Natural killer cell (primary cell): ENCODE measurements at regions of chr17 and their contacts with region 1.

Region 1: DNA sequence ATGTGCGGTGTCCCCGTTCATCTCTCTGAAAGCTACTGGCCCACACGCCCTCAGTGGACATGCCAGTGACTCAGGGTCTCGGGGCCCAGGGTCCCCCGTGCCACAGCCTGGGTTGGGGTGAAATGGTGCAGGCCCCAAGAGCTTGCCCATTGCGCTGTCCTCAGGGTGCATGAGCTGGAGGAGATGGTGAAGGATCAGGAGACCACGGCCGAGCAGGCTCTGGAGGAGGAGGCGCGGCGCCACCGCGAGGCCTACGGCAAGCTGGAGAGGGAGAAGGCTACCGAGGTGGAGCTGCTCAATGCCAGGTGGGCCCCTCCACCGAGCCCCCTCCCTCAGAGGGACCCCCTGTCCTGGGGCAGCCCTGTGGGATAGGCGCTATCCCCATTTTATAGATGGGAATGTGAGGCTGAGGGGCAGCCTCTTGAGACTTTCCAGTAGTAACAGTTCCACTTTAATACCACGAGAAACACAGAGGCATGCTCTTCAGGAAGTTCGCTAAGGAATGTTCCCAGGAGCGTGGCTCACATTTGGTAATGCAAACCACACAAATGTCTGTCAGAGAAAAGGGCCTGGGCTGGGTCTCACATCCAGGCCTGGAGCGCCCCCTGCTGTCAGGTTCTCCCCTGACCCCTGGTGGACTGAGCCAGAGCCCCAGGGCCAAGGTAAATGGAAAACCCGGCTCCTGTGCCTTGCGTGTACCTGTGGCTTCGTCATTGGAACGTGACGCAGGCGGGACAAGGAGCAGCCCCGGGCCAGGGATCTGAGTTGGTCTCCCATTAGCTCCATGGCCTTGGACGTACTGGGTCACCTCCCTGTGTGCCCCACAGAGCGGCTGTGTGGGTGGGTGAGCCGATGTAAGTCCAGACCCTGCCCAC is 133.7 kb downstream of the RAB11FIP4 start:
- DNase-seq: peak; percentile 89 to 90
- ATAC-seq: peak; percentile 77 to 87 (median 80)
- H3K4me3 ChIP-seq: no peak overlapping the region
- H3K4me3 Mint-ChIP-seq: no peak overlapping the region
- H3K27ac ChIP-seq: no peak overlapping the region
- H3K27ac Mint-ChIP-seq: peak overlapping the region; percentile 29 to 42
- H3K4me1 ChIP-seq: peaks cover 8% of the 10 kb centered on the region
- H3K4me1 Mint-ChIP-seq: no peaks in the 10 kb centered on the region
- H3K27me3 ChIP-seq: no peaks in the 10 kb centered on the region
- H3K27me3 Mint-ChIP-seq: no peaks in the 10 kb centered on the region
- CTCF ChIP-seq: peak; percentile 97

Region 2: GRCh38 chr17:30933966-30934365 is 591.2 kb before region 1 on chr17:
- intact Hi-C with region 1: no loop called
- DNase-seq: no peak
- ATAC-seq: no peak
- H3K4me3 ChIP-seq: no peak overlapping the region
- H3K4me3 Mint-ChIP-seq: no peak overlapping the region
- H3K27ac ChIP-seq: no peak overlapping the region
- H3K27ac Mint-ChIP-seq: no peak overlapping the region
- H3K4me1 ChIP-seq: no peaks in the 10 kb centered on the region
- H3K4me1 Mint-ChIP-seq: no peaks in the 10 kb centered on the region
- H3K27me3 ChIP-seq: no peaks in the 10 kb centered on the region
- H3K27me3 Mint-ChIP-seq: no peaks in the 10 kb centered on the region
- CTCF ChIP-seq: no peak

Region 3: DNA sequence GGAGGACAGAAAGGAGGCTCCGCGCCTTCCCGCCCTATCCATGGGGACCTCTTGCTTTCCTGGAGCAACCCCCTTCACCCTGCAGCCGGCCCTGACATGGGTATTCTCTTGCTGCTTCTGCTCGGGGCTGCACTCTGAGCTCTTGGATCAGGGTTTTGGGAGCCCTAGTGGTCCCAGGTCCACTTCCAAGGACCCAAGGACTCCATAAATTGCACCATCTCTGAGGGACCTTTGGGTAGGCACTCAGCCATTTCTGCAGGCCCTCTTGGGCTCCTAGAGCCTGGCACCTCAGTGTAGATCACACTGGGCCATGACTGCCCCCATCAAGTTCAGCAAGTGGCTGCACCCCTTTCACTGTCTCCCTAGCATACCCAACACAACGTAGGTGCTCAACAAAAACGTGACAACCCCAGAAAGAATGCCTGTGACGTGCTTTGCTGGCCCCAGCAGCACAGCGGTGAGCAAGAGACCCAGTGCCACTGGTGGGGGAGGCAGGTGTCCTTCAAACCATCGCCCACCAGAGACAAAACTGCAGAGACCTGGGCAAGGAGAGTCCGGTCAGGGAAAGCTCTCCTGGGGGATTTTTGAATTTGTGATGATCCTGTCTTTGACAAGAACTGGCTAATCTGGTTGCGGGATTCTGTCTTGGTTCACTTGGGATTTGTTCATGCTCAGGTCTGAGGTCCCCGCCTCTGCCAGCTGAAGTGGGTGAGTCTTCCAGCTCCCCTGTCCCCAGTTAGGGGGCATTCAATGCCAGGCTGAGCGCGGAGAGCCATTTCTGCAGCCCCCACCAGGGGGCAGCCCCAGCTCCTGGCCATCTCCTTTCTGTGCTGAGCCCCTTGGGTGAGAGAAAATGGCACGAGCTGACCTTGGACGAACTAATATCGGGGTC is 136.1 kb before region 1 on chr17:
- intact Hi-C with region 1: loop called (anchors 1 kb)
- DNase-seq: peak in 1 of 2 donors; percentile 67
- ATAC-seq: peak; percentile 54 to 68 (median 64)
- H3K4me3 ChIP-seq: no peak overlapping the region
- H3K4me3 Mint-ChIP-seq: no peak overlapping the region
- H3K27ac ChIP-seq: no peak overlapping the region
- H3K27ac Mint-ChIP-seq: no peak overlapping the region
- H3K4me1 ChIP-seq: peaks cover 15% of the 10 kb centered on the region
- H3K4me1 Mint-ChIP-seq: peaks cover 10 to 20% of the 10 kb centered on the region in 2 donors
- H3K27me3 ChIP-seq: peaks cover 23% of the 10 kb centered on the region
- H3K27me3 Mint-ChIP-seq: peaks cover 31 to 36% of the 10 kb centered on the region in 2 donors
- CTCF ChIP-seq: peak; percentile 57

Region 4: DNA sequence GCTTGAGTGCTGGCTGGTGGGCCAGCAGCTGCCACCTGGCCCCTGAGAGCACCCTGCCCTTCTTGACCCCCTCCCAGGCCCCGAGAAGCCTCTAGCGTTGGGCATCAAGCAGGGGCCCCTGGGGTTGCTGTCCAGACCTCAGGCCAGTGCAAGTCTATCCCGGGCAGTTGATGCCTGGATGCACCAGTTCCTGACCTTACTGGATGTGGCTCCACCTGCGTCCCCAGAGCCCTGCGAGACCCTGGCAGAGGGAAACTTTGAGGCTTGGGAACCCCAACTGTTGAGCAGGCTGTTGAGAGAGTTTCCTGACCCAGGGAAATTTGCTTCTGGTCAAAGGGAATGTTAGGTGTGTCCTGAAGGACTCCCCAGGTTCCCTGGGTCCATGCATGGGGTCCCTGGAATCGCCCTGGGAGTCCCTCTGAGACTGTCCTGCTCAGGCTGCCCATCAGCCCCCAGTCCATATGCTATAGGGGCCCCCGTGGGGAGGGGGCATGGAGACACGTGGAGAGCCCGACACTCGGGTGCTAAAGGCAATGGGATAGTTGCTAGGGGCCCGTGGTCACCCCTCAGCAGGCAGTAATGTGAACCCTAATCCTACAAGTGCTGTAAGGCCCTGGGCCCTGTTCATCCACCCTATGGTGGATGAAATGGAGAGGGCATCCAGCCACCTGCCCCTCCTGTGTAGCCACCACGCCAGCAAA is 87.3 kb before region 1 on chr17:
- intact Hi-C with region 1: loop called (anchors 1 kb)
- DNase-seq: no peak
- ATAC-seq: no peak
- H3K4me3 ChIP-seq: no peak overlapping the region
- H3K4me3 Mint-ChIP-seq: no peak overlapping the region
- H3K27ac ChIP-seq: no peak overlapping the region
- H3K27ac Mint-ChIP-seq: no peak overlapping the region
- H3K4me1 ChIP-seq: peaks cover 20% of the 10 kb centered on the region
- H3K4me1 Mint-ChIP-seq: peaks cover 6 to 16% of the 10 kb centered on the region in 2 donors
- H3K27me3 ChIP-seq: no peaks in the 10 kb centered on the region
- H3K27me3 Mint-ChIP-seq: peaks cover 0 to 7% of the 10 kb centered on the region in 2 donors
- CTCF ChIP-seq: no peak

Region 5: DNA sequence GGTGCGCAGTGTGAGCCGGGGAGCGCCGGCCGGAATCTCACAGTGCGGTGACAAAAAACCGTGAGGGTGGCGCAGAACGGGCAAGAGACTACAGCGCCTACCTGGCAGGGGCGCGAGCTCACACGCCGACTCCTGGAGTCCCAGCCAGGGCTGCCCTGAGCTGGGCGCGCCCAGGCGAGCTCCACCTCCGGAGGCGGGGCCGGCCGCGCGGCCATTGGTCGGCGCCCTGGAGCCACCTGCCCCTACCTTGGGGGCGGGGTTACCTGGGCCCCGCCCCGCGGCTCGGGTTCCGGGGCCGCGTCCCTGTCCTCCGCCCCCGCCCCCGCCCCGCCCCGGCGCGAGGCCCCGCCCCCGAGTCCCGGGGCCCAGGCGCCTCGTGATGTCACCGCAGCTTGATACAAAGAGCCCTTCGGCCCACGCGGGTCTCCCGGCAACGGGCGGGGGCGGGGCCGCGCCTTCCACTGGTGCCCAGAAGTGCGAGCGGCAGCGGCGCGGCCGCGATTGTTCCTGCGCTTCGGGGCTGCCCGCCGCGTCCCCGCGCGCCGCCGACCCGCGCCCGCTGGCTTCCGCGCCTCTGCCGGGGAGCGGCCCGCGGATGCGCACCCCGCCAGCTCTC is 37.4 kb before region 1 on chr17:
- intact Hi-C with region 1: loop called (anchors 5 kb)
- DNase-seq: peak; percentile 92 to 98
- ATAC-seq: peak; percentile 88 to 96 (median 89)
- H3K4me3 ChIP-seq: peak overlapping the region; percentile 74
- H3K4me3 Mint-ChIP-seq: peak overlapping the region; percentile 91
- H3K27ac ChIP-seq: peak overlapping the region; percentile 69
- H3K27ac Mint-ChIP-seq: peak overlapping the region; percentile 89 to 97
- H3K4me1 ChIP-seq: peaks cover 54% of the 10 kb centered on the region
- H3K4me1 Mint-ChIP-seq: peaks cover 46 to 51% of the 10 kb centered on the region in 2 donors
- H3K27me3 ChIP-seq: no peaks in the 10 kb centered on the region
- H3K27me3 Mint-ChIP-seq: no peaks in the 10 kb centered on the region
- CTCF ChIP-seq: no peak

Region 6: GRCh38 chr17:31581022-31581490 is 55.9 kb after region 1 on chr17:
- intact Hi-C with region 1: no loop called
- DNase-seq: no peak
- ATAC-seq: no peak
- H3K4me3 ChIP-seq: no peak overlapping the region
- H3K4me3 Mint-ChIP-seq: no peak overlapping the region
- H3K27ac ChIP-seq: peak overlapping the region; percentile 38
- H3K27ac Mint-ChIP-seq: peak overlapping the region in 1 of 2 donors; percentile 31
- H3K4me1 ChIP-seq: peaks cover 21% of the 10 kb centered on the region
- H3K4me1 Mint-ChIP-seq: peaks cover 9 to 21% of the 10 kb centered on the region in 2 donors
- H3K27me3 ChIP-seq: no peaks in the 10 kb centered on the region
- H3K27me3 Mint-ChIP-seq: no peaks in the 10 kb centered on the region
- CTCF ChIP-seq: no peak